ENCODE measurements at regions of chr20 and their contacts with region 1.

Region 1: GRCh38 chr20:51562332-51563155 is 20.0 kb upstream of the NFATC2 start:
- DNase-seq: peak; percentile 84
- ATAC-seq: peak; percentile 85

Region 2: GRCh38 chr20:51456511-51457509 is 105.7 kb before region 1 on chr20:
- intact Hi-C with region 1: loop called (anchors 10 kb)
- DNase-seq: peak; percentile 97
- ATAC-seq: peak; percentile 100

Region 3: DNA sequence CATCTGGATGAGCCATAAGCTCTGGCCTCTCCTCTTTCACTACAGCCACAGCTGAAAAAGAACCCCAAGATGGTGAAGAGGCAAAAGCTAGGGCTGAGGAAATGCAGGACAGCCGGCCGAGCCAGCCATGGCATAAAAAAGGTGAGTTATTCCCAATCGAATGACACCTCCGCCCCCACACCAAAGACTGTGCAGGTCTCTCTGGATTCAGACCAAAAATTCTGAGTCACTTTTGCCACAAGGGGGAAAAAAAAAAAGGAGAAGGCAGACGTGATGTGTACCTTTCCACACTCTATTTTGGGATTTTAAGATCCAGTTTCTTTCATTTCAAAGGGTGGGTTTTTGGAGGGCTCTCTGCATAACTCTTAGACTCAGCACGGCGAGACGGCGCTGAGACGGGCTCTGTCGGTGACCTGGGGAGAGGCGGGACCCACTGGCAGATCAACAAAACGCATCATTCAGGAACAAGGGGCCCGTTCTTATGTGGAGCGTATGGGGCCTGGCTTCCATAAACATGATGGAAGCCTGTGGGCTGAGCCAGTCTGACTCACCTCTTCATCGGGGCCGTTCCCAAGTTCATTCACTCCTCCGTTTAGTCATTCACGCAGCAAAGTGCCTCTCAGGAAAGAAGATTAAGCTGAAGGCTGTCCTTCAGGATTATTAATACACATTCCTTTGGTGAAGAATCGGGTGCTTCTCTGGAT is 74.8 kb before region 1 on chr20:
- intact Hi-C with region 1: no loop called
- DNase-seq: no peak
- ATAC-seq: no peak

Measured in Right ventricle myocardium superior (tissue), 1 donor.